ENCODE measurements at regions of chr1 and their contacts with region 1.

Region 1: GRCh38 chr1:183270541-183271141 is 84.6 kb downstream of the LAMC2 start:
- DNase-seq: peak; percentile 40

Region 2: GRCh38 chr1:183191833-183192232 is 78.8 kb before region 1 on chr1:
- intact Hi-C with region 1: loop called in 1 of 2 experiments (anchors 2 kb)
- DNase-seq: no peak

Region 3: DNA sequence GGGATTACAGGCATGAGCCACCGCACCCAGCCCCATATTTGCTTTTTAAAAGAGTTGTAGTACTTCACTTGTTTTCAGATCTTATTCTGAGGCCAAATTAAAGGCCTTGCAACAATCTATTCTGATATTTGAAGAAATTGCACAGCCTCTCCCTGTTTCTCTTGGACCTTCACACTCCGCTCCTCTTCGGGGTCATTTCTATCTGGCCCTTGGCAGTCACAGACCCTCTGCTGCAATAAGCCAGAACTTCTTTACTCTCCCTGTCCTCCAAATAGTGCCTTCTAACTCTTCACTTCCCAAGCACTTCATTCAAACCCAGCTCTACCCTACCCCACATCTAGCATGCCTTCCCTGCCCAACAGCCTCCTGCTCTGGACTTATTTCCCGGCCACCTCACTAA is 26.1 kb after region 1 on chr1:
- intact Hi-C with region 1: loop called in 1 of 2 experiments (anchors 1 kb)
- DNase-seq: no peak

Region 4: GRCh38 chr1:183471743-183472487 is 201.3 kb after region 1 on chr1:
- intact Hi-C with region 1: no loop called
- DNase-seq: peak; percentile 99